Heart right ventricle (tissue), 16 donors: ENCODE measurements at regions of chr3 and their contacts with region 1.

Region 1: GRCh38 chr3:65361448-65361847 is 673.6 kb upstream of the ADAMTS9 start:
- DNase-seq: no peak
- ATAC-seq: no peak
- H3K4me3 ChIP-seq: no peak overlapping the region
- H3K27ac ChIP-seq: no peak overlapping the region
- H3K4me1 ChIP-seq: no peaks in the 10 kb centered on the region
- H3K27me3 ChIP-seq: peaks cover 0 to 7% (median 0%) of the 10 kb centered on the region in 7 donors
- CTCF ChIP-seq: no peak

Region 2: DNA sequence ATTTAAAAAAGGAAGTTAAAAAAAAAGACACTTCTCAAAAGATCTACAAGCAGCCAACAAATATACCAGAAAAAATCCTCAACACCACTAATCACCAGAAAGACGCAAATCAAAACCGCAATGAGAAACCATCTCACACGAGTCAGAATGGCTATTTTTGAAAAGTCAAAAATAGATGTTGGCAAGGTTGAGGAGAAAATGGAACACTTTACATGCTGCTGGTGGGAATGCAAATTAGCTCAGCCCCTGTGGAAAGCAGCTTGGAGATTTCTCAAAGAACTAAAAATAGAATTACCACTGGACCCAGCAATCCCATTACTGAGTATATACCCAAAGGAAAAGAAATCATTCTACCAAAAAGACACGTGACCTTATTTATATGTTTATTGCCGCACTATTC is 98.9 kb before region 1 on chr3:
- intact Hi-C with region 1: no loop called
- DNase-seq: no peak
- ATAC-seq: peak in 6 of 8 donors; percentile 23 to 61 (median 55)
- H3K4me3 ChIP-seq: no peak overlapping the region
- H3K27ac ChIP-seq: no peak overlapping the region
- H3K4me1 ChIP-seq: no peaks in the 10 kb centered on the region
- H3K27me3 ChIP-seq: no peaks in the 10 kb centered on the region
- CTCF ChIP-seq: no peak

Region 3: DNA sequence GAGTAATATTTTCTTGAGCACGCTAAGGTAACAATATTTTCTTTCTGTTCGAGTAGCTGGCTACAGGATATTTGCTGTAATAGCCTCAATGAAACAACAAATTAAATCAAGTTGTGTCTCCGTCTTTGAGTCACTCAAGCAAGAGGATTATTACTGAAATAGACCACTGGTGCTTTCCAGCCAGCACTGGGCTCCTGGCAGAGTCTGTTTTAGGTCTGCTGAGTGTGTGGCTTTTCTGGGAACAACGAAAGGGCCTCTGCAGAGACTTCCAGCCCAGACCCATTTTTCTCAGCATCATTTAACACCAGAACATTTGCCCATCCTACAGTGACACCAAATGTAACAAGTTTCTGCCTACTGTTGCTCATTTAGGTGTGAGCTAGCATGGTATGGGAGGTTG is 24.4 kb after region 1 on chr3:
- intact Hi-C with region 1: loop called in 1 of 10 experiments (anchors 1 kb)
- DNase-seq: no peak
- ATAC-seq: peak in 4 of 8 donors; percentile 26 to 70 (median 70)
- H3K4me3 ChIP-seq: no peak overlapping the region
- H3K27ac ChIP-seq: no peak overlapping the region
- H3K4me1 ChIP-seq: peaks cover 0 to 10% (median 0%) of the 10 kb centered on the region in 9 donors
- H3K27me3 ChIP-seq: no peaks in the 10 kb centered on the region
- CTCF ChIP-seq: no peak

Region 4: DNA sequence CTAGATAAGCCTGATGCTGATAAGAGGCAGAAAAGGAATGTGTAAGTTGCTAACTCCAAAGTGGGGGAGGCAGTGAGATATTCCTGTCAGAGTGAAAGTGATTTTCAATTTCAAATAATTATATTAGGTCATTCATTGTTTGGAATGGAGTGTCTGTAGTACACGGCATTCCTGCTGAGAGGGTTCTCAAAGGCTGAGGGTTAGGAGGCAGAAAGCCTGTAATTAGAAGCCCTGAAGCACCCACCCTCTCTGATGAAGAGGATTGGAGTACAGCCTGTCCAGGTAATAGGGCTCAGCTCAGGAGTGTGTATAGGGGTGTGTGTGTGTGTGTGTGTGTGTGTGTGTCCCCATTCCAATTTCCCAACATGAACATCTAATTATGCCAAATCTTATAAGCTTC is 190.5 kb after region 1 on chr3:
- intact Hi-C with region 1: no loop called
- DNase-seq: no peak
- ATAC-seq: no peak
- H3K4me3 ChIP-seq: no peak overlapping the region
- H3K27ac ChIP-seq: peak overlapping the region in 1 of 10 donors; percentile 11
- H3K4me1 ChIP-seq: peaks cover 0 to 57% (median 16%) of the 10 kb centered on the region in 9 donors
- H3K27me3 ChIP-seq: peaks cover 0 to 14% (median 0%) of the 10 kb centered on the region in 7 donors
- CTCF ChIP-seq: no peak